ENCODE measurements at regions of chr6 and their contacts with region 1.

Region 1: DNA sequence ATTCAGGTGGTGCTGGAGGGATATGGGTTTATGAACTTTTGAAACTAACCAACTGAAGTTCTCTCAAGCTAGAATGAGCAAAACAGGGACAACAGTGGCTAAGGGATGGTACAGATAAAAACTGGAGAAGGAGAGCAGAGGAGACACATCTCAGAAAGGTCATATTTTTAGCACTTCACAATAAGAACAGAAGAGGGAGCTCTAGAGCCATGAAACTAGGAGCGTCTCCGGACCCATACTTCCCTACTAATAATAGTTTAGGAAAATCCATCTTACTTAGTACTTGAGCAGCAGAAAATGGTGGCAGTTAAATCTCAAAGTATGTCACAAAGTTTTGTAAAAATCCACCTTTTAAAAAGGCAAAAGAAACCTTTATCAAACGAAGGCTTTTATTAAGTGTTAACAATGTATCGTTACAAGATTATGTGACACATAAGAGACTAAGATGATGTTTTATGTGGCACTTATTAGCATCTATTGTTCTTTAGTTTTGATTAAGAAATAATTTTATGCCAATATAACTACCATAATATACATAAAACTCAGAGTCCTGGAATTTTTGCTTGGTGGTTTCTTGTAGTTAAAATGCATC is 278.6 kb downstream of the TBC1D32 start:
- H3K4me3 Mint-ChIP-seq: no peak overlapping the region
- H3K27ac Mint-ChIP-seq: no peak overlapping the region
- H3K4me1 Mint-ChIP-seq: no peaks in the 10 kb centered on the region
- H3K27me3 Mint-ChIP-seq: no peaks in the 10 kb centered on the region

Region 2: DNA sequence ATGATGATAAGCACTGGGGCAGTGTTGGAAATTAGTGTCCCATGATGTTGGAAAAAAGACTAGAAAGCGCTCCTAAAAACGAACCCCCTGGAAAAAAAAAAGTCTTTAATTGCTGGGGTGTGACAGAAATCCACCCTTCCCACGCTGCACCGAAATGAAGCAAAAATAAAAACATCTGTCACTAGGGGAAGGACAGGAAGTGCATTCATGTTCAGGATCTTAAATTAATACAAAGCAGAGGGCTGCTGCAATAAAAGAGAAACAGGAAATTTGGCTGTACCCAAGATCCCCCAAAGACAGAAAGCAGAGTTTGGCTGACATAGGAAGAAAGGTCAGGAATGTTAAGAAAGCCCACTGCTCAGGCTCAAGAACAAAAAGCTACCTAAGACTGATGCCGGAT is 55.3 kb before region 1 on chr6:
- intact Hi-C with region 1: no loop called
- H3K4me3 Mint-ChIP-seq: no peak overlapping the region
- H3K27ac Mint-ChIP-seq: no peak overlapping the region
- H3K4me1 Mint-ChIP-seq: no peaks in the 10 kb centered on the region
- H3K27me3 Mint-ChIP-seq: no peaks in the 10 kb centered on the region

Region 3: GRCh38 chr6:121305957-121306607 is 250.4 kb after region 1 on chr6:
- intact Hi-C with region 1: loop called (anchors 2 kb)
- H3K4me3 Mint-ChIP-seq: no peak overlapping the region
- H3K27ac Mint-ChIP-seq: no peak overlapping the region
- H3K4me1 Mint-ChIP-seq: no peaks in the 10 kb centered on the region
- H3K27me3 Mint-ChIP-seq: no peaks in the 10 kb centered on the region

Region 4: DNA sequence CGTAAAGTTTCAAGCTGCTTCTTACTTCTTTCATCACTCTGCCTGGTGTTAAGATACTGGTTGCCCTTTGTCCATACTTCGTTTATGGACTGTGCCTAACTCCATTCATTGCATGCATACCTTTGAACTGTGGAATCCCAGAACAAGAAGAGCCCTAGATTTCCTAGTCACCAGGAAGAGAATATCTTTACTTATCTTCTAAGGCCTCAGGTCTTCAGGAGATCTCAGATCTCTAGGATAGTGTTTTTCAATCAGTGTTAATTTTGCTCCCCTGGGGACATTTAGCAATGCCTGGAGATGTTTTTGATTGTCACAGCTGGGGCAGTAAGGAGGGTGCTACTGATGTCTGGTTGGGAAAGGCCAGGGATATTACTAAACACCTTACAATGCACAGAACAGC is 344.3 kb after region 1 on chr6:
- intact Hi-C with region 1: loop called (anchors 5 kb)
- H3K4me3 Mint-ChIP-seq: no peak overlapping the region
- H3K27ac Mint-ChIP-seq: no peak overlapping the region
- H3K4me1 Mint-ChIP-seq: no peaks in the 10 kb centered on the region
- H3K27me3 Mint-ChIP-seq: no peaks in the 10 kb centered on the region

Region 5: GRCh38 chr6:121849477-121849876 is 793.8 kb after region 1 on chr6:
- intact Hi-C with region 1: loop called (anchors 10 kb)
- H3K4me3 Mint-ChIP-seq: no peak overlapping the region
- H3K27ac Mint-ChIP-seq: no peak overlapping the region
- H3K4me1 Mint-ChIP-seq: no peaks in the 10 kb centered on the region
- H3K27me3 Mint-ChIP-seq: no peaks in the 10 kb centered on the region

Region 6: DNA sequence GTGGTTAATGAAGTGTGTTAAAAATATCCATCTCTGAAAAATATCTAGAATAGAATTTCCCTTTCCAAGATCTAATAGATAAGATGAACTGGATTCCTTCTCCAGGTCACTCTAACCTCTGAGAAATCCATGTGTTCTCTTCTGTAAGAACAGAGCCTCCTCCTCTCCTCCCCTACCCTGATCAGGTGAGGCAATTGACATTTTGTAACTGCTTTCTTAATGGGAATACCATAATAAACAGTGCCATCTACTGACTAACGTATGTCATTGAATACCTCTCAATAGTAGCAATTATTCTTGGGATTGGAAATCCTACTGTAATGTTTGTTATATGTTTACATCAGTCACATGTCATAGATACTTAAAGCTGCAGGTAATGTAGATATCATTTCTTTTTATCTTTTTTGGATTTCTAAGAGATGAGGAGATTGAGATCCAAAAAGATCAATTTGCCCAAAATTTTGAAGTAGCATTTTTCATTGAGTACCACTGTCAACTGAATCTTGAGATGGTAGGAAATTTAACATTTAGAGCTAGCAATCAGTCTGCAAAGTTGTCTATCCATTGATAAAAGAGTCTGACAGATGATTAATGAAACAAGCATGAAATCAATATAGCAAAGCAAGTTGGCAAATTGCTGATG is 978.0 kb after region 1 on chr6:
- intact Hi-C with region 1: loop called (anchors 2 kb)
- H3K4me3 Mint-ChIP-seq: no peak overlapping the region
- H3K27ac Mint-ChIP-seq: no peak overlapping the region
- H3K4me1 Mint-ChIP-seq: no peaks in the 10 kb centered on the region
- H3K27me3 Mint-ChIP-seq: no peaks in the 10 kb centered on the region

Region 7: GRCh38 chr6:122520179-122520578 is 1464.5 kb after region 1 on chr6:
- intact Hi-C with region 1: loop called (anchors 10 kb)
- H3K4me3 Mint-ChIP-seq: no peak overlapping the region
- H3K27ac Mint-ChIP-seq: no peak overlapping the region
- H3K4me1 Mint-ChIP-seq: no peaks in the 10 kb centered on the region
- H3K27me3 Mint-ChIP-seq: no peaks in the 10 kb centered on the region

Measured in dendritic cell treated with granulocyte-macrophage colony-stimulating factor and Interleukin-4, amounts not matched to agents 40 ng/mL and 50 ng/mL, for 4 days (primary cell).